ENCODE measurements at regions of chr20 and their contacts with region 1.

Region 1: GRCh38 chr20:45857114-45857881 is at the starts of genes ACOT8 and ZSWIM3:
- DNase-seq: peak; percentile 68 to 99 (median 96)
- ATAC-seq: peak; percentile 97
- H3K4me3 Mint-ChIP-seq: peak within 1 kb of the TSS; percentile 94 to 97 (median 96)
- H3K27ac Mint-ChIP-seq: peak within 1 kb of the TSS; percentile 96 to 99 (median 98)
- H3K4me1 Mint-ChIP-seq: peaks cover 21 to 62% (median 58%) of the 10 kb centered on the region in 4 donors
- H3K27me3 Mint-ChIP-seq: no peaks in the 10 kb centered on the region
- polyA plus RNA-seq, gene ACOT8: 37.5 to 46.2 (median 38.4) TPM
- polyA plus RNA-seq, gene ZSWIM3: 0.35 to 2.1 (median 0.65) TPM

Region 2: GRCh38 chr20:45833030-45833882 is 24.0 kb before region 1 on chr20 and contains the start of gene SNX21:
- POLR2A ChIA-PET with region 1: interaction called, 18 read pairs
- DNase-seq: peak in 5 of 10 donors; percentile 3 to 36 (median 23)
- ATAC-seq: peak; percentile 67 to 83
- H3K4me3 Mint-ChIP-seq: peak within 1 kb of the TSS; percentile 77 to 95 (median 90)
- H3K27ac Mint-ChIP-seq: peak within 1 kb of the TSS; percentile 31 to 91 (median 77)
- H3K4me1 Mint-ChIP-seq: peaks cover 3 to 18% (median 14%) of the 10 kb centered on the region in 4 donors
- H3K27me3 Mint-ChIP-seq: peaks cover 0 to 4% (median 2%) of the 10 kb centered on the region in 5 donors
- polyA plus RNA-seq, gene SNX21: 0.30 to 2.2 (median 1.4) TPM

Region 3: GRCh38 chr20:45880988-45881788 is 23.9 kb after region 1 on chr20 and contains the start of gene ZSWIM1:
- POLR2A ChIA-PET with region 1: interaction called, 34 read pairs
- DNase-seq: peak; percentile 91 to 99 (median 98)
- ATAC-seq: peak; percentile 99 to 100
- H3K4me3 Mint-ChIP-seq: peak within 1 kb of the TSS; percentile 87 to 96 (median 91)
- H3K27ac Mint-ChIP-seq: peak within 1 kb of the TSS; percentile 86 to 98 (median 96)
- H3K4me1 Mint-ChIP-seq: peaks cover 20 to 45% (median 39%) of the 10 kb centered on the region in 4 donors
- H3K27me3 Mint-ChIP-seq: no peaks in the 10 kb centered on the region
- polyA plus RNA-seq, gene ZSWIM1: 0.96 to 9.8 (median 1.7) TPM

Region 4: GRCh38 chr20:45971675-45972499 is 114.6 kb after region 1 on chr20 and contains the start of gene ZNF335:
- POLR2A ChIA-PET with region 1: interaction called, 23 read pairs
- DNase-seq: peak; percentile 86 to 100 (median 94)
- ATAC-seq: peak; percentile 79 to 83
- H3K4me3 Mint-ChIP-seq: peak within 1 kb of the TSS; percentile 89 to 98 (median 95)
- H3K27ac Mint-ChIP-seq: peak within 1 kb of the TSS; percentile 99 to 100 (median 100)
- H3K4me1 Mint-ChIP-seq: peaks cover 12 to 26% (median 23%) of the 10 kb centered on the region in 4 donors
- H3K27me3 Mint-ChIP-seq: peaks cover 0 to 5% (median 0%) of the 10 kb centered on the region in 5 donors
- polyA plus RNA-seq, gene ZNF335: 6.4 to 13.2 (median 7.8) TPM